PC-3 (cell line): ENCODE measurements at regions of chr2 and their contacts with region 1.

Region 1: GRCh38 chr2:207619764-207620203 is 5.4 kb downstream of the METTL21A start:
- DNase-seq: no peak
- ATAC-seq: no peak
- H3K4me3 ChIP-seq: no peak overlapping the region
- H3K27ac ChIP-seq: no peak overlapping the region
- H3K4me1 ChIP-seq: peaks cover 37% of the 10 kb centered on the region
- H3K27me3 ChIP-seq: no peaks in the 10 kb centered on the region
- CTCF ChIP-seq: no peak

Region 2: DNA sequence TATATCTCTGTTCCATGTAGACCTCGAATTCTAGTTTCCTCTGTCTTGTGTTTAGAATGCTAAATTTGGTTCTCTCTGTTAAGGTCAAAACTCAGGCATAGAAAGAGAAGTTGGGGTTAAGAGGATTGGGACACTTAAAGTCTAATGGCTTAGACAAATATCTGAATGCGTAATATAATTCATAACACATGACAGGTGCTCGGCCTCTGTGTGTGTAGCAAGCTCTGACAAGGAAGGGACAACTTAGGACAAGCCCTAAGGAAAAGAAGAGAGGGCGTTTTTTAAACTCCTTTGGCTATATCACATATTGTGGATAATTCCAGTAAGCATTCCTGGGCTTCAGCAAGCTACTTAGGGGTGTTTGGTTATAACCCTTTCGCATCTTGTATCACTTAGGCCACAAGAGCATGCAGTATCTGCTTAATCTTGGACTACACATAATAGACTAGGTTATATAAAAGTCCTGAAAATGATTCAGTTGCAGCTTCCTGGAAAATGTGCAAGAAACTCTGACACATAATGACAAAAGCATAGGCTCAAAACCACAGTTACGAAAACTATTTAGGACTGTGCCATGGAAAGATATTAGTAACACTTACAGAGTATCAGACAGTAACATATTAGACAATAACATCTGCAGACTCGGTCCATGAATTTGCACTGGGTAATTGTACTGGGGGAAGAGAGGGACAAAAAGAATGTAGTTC is 106.1 kb before region 1 on chr2:
- CTCF ChIA-PET with region 1: no interaction called
- POLR2A ChIA-PET with region 1: interaction called, 9 read pairs
- intact Hi-C with region 1: loop called (anchors 5 kb)
- DNase-seq: peak; percentile 93
- ATAC-seq: peak; percentile 93
- H3K4me3 ChIP-seq: peak overlapping the region; percentile 29; the same call in 1 of the 2 replicates
- H3K27ac ChIP-seq: peak overlapping the region; percentile 85
- H3K4me1 ChIP-seq: peaks cover 36% of the 10 kb centered on the region
- H3K27me3 ChIP-seq: no peaks in the 10 kb centered on the region
- CTCF ChIP-seq: no peak

Region 3: GRCh38 chr2:207584952-207585351 is 34.8 kb before region 1 on chr2:
- CTCF ChIA-PET with region 1: no interaction called
- POLR2A ChIA-PET with region 1: no interaction called
- intact Hi-C with region 1: loop called (anchors 1 kb)
- DNase-seq: no peak
- ATAC-seq: no peak
- H3K4me3 ChIP-seq: no peak overlapping the region
- H3K27ac ChIP-seq: no peak overlapping the region
- H3K4me1 ChIP-seq: 0 out of 2 replicates have a peak, but pooled peaks cover under 1% of the 10 kb centered on the region
- H3K27me3 ChIP-seq: no peaks in the 10 kb centered on the region
- CTCF ChIP-seq: no peak